HCT116 (cell line): ENCODE measurements at regions of chr1 and their contacts with region 1.

Region 1: GRCh38 chr1:83931658-83932253 is 67.2 kb downstream of the TTLL7 start:
- DNase-seq: peak; percentile 39
- ATAC-seq: peak; percentile 88
- H3K4me3 ChIP-seq: no peak overlapping the region
- H3K27ac ChIP-seq: no peak overlapping the region
- H3K4me1 ChIP-seq: peaks cover 0 to 4% of the 10 kb centered on the region in 2 experiments; a peak in 1 of 4 replicates
- H3K27me3 ChIP-seq: no peaks in the 10 kb centered on the region
- CTCF ChIP-seq: peak; percentile 68 to 82 (median 81); a peak in 5 of 6 replicates
- POLR2A ChIP-seq: no peak
- RAD21 ChIP-seq: peak; percentile 88

Region 2: GRCh38 chr1:83910461-83910860 is 21.3 kb before region 1 on chr1:
- CTCF ChIA-PET with region 1: no interaction called
- POLR2A ChIA-PET with region 1: no interaction called
- RAD21 ChIA-PET with region 1: no interaction called
- intact Hi-C with region 1: loop called (anchors 1 kb)
- DNase-seq: no peak
- ATAC-seq: no peak
- H3K4me3 ChIP-seq: no peak overlapping the region
- H3K27ac ChIP-seq: no peak overlapping the region
- H3K4me1 ChIP-seq: no peaks in the 10 kb centered on the region
- H3K27me3 ChIP-seq: no peaks in the 10 kb centered on the region
- CTCF ChIP-seq: no peak
- POLR2A ChIP-seq: no peak
- RAD21 ChIP-seq: no peak

Region 3: DNA sequence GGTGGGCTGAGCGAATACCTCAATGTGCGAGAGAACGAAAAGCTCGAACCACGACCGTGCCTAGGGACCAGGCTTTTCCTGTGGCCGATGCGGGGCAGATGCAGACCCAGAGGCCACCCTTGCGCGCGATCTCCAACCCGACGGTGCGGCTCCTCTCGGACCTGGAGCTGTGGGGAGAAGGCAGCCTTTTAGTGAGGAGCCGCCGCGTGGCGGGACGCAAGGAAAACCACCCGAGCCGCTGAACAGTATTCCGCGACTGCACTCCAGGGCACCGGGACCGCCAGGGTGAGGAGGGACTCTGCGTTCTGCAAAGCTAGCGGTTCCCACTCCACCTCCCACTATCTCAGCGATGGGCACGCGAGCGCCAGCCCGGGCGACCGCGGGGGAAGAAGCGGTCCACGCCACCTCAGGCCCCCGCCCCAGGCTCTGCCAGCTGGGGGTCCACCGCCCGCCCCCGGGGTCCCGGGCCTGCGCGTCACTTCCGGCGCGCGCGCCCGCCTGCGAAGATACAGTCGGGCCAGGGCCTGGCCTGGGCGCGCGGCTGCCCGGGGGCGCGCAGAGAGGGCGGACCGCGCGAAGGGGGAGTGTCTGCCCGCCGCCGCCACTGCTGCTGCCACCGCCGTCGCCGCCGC is 145.8 kb after region 1 on chr1:
- CTCF ChIA-PET with region 1: no interaction called
- POLR2A ChIA-PET with region 1: no interaction called
- RAD21 ChIA-PET with region 1: no interaction called
- intact Hi-C with region 1: loop called (anchors 2 kb)
- DNase-seq: peak; percentile 38
- ATAC-seq: peak; percentile 90
- H3K4me3 ChIP-seq: peak overlapping the region; percentile 73 to 82
- H3K27ac ChIP-seq: peak overlapping the region; percentile 72
- H3K4me1 ChIP-seq: peaks cover 0 to 16% of the 10 kb centered on the region in 2 experiments; a peak in 2 of 4 replicates
- H3K27me3 ChIP-seq: no peaks in the 10 kb centered on the region
- CTCF ChIP-seq: 0 out of 6 replicates have a peak, but pooled peaks of 1 of the 3 experiments have one; percentile 3
- POLR2A ChIP-seq: peak; percentile 31
- RAD21 ChIP-seq: no peak